Activated naive CD4-positive, alpha-beta T cell treated with anti-CD3 and anti-CD28 coated beads for 36 hours (primary cell): ENCODE measurements at regions of chr20 and their contacts with region 1.

Region 1: DNA sequence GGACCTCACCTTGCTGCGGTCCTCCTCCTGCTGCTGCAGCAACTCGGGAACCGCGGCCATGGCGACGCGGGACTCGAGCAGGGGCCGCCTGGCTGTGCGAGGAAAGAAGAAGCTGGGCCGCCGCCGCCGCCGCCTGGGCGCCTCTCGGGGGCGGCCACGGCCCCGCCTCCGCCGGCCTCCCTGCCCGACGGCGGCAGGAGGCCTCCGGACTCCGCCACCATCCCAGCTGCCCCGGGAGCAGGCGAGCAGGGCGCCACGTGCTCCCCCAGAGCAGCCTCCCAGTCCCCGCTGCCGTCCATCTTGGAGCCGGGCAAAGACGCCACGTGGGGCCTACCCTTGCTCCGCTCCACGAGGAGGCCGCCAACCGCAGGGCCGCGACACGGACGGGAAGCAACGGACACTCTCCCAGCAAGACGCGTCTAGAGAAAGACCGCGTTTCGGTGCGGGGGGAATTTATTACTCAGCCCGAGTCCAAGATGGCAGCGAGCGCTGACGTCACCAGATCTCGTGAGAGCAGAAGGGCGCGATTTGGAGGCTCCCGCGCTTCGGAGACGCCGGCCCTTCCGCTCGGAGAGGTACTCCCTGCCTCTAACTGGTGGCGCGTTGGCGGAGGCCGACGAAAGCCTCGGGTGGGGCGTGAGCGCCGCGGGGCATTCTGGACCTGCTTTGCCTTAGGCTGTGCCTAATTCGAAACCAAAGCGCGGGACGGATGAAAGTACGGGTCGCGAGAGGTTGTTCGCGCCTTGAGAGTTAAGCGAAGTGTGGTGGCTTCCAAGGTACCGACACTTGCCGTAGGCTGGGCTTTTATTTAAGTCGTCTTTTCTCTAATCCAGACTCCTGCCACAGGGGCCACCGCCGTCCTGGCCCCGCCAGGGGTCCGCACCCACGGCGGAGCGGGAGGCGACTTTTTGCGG is at the starts of genes MGME1 and SNX5:
- DNase-seq: peak; percentile 99
- H3K4me3 Mint-ChIP-seq: peak within 1 kb of the TSS; percentile 86
- H3K27ac Mint-ChIP-seq: peak within 1 kb of the TSS; percentile 98
- H3K4me1 Mint-ChIP-seq: peaks cover 49% of the 10 kb centered on the region
- H3K27me3 Mint-ChIP-seq: no peaks in the 10 kb centered on the region
- total RNA-seq, gene MGME1: 28.7 to 30.6 TPM
- total RNA-seq, gene SNX5: 228 to 237 TPM

Region 2: DNA sequence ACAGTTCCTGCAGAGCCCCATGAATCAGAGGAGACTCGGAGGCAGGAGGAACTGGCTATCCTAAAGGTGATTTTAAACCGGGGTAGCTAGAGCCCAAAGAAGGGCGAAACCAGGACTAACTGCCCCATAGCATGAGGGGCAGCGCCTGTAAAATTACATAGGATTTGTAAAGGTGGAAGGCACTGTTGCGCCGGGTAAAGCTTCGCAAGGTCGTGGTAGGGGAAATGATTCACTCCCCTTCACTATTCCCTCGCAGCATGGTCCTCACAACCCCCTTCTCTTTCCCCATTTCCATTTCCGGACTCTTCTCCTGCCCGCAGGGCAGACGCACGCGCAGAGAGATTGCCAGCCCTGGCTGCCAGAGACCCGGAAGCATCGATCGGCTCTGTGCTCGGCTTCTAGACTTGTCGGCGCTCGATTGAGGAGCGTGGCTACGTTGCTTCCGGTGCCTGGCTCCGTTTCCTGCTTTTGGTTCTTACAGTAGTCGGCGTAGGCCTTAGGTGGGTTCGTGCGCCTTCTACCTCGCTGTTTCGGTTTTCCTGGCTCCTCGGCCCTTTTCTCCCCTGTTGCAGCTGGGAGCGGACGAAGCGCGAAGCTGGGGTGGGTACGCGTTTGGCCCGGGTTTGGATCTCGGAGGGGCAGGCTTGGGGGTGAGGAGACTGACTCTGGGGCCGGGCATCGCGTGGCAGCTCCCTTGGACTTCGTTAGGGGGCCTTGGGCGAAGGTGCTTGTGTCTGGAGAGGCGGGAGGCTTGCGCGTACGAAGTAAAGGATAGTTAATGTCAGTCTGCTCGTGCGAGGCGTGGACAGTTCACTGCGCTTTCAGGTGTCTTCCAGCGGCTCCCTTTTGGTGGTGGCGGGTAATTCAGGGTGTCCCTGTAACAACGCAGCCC is 1238.8 kb before region 1 on chr20 and contains the start of gene SNRPB2:
- CTCF ChIA-PET with region 1: interaction called, 3 read pairs
- intact Hi-C with region 1: loop called (anchors 5 kb)
- DNase-seq: peak; percentile 95
- H3K4me3 Mint-ChIP-seq: peak within 1 kb of the TSS; percentile 99
- H3K27ac Mint-ChIP-seq: peak within 1 kb of the TSS; percentile 98
- H3K4me1 Mint-ChIP-seq: peaks cover 45% of the 10 kb centered on the region
- H3K27me3 Mint-ChIP-seq: peaks cover 6% of the 10 kb centered on the region
- total RNA-seq, gene SNRPB2: 93.1 to 99.8 TPM

Region 3: DNA sequence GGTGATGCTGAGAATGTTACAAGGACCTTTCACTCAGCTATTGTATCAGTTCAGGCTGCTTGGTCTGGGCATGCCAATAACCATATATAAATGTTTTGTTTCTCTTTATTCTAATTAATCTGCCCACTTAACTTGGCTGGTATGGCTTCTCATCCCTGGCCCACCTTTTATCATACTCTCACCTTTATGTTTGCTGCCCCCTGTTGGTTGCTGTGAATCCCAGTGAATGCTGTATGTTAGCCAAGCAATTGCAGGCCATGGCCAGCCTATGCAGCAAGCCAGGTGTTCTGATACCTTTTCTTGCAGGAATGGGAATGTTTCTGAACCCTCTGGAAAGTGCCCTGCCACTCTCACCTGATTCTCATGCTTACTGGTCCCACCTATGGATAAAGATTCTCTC is 687.1 kb before region 1 on chr20:
- CTCF ChIA-PET with region 1: no interaction called
- intact Hi-C with region 1: no loop called
- DNase-seq: peak; percentile 28
- H3K4me3 Mint-ChIP-seq: no peak overlapping the region
- H3K27ac Mint-ChIP-seq: no peak overlapping the region
- H3K4me1 Mint-ChIP-seq: no peaks in the 10 kb centered on the region
- H3K27me3 Mint-ChIP-seq: no peaks in the 10 kb centered on the region

Region 4: DNA sequence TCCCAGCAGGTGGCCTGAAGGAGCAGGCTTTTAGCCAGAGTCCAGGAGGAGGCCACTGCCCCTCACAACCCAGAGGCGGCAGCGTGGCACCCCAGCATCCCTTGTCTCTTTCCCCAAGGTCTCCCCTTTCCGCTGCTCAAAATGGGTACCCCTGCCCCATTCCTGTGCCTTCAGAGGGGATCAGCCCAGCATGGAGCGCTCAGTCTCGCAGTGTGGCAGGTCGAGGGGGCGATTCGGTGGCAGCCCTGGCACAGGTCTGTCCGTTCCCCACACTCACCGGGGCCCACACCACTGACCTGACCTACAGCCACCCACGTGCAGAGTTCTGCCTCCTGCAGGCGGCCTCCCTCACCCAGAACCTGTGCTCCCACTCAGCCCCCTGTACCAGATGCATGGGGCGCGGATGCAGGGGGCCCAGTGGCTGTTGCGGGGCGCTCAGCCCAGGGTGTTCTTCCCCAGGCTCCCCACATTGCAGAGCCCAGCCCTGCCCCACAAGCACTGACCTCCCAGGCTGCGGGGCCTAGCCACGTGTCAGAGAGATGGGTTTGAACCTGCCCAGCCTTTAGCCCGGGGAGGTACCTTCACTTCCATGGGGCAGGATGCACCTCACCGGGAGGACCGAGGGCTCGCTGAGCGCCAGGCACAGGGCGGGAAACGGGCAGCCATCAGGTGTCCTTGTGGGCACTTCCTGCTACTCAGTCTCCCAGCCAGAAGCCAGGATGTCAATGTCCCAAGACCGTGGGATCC is 356.9 kb before region 1 on chr20:
- CTCF ChIA-PET with region 1: no interaction called
- intact Hi-C with region 1: loop called (anchors 5 kb)
- DNase-seq: no peak
- H3K4me3 Mint-ChIP-seq: peak overlapping the region; percentile 38
- H3K27ac Mint-ChIP-seq: peak overlapping the region; percentile 82
- H3K4me1 Mint-ChIP-seq: peaks cover 34% of the 10 kb centered on the region
- H3K27me3 Mint-ChIP-seq: no peaks in the 10 kb centered on the region

Region 5: GRCh38 chr20:17995967-17996819 is 27.6 kb after region 1 on chr20:
- CTCF ChIA-PET with region 1: interaction called, 8 read pairs
- intact Hi-C with region 1: loop called (anchors 1 kb)
- DNase-seq: peak; percentile 59
- H3K4me3 Mint-ChIP-seq: no peak overlapping the region
- H3K27ac Mint-ChIP-seq: no peak overlapping the region
- H3K4me1 Mint-ChIP-seq: peaks cover 21% of the 10 kb centered on the region
- H3K27me3 Mint-ChIP-seq: peaks cover 12% of the 10 kb centered on the region

Region 6: GRCh38 chr20:18466894-18467730 is 498.5 kb after region 1 on chr20 and contains the starts of genes DZANK1 and POLR3F:
- CTCF ChIA-PET with region 1: no interaction called
- intact Hi-C with region 1: loop called (anchors 2 kb)
- DNase-seq: peak; percentile 94
- H3K4me3 Mint-ChIP-seq: peak within 1 kb of the TSS; percentile 92
- H3K27ac Mint-ChIP-seq: peak within 1 kb of the TSS; percentile 84
- H3K4me1 Mint-ChIP-seq: peaks cover 32% of the 10 kb centered on the region
- H3K27me3 Mint-ChIP-seq: no peaks in the 10 kb centered on the region
- total RNA-seq, gene DZANK1: 0.79 to 0.94 TPM
- total RNA-seq, gene POLR3F: 7.0 to 8.3 TPM

Region 7: DNA sequence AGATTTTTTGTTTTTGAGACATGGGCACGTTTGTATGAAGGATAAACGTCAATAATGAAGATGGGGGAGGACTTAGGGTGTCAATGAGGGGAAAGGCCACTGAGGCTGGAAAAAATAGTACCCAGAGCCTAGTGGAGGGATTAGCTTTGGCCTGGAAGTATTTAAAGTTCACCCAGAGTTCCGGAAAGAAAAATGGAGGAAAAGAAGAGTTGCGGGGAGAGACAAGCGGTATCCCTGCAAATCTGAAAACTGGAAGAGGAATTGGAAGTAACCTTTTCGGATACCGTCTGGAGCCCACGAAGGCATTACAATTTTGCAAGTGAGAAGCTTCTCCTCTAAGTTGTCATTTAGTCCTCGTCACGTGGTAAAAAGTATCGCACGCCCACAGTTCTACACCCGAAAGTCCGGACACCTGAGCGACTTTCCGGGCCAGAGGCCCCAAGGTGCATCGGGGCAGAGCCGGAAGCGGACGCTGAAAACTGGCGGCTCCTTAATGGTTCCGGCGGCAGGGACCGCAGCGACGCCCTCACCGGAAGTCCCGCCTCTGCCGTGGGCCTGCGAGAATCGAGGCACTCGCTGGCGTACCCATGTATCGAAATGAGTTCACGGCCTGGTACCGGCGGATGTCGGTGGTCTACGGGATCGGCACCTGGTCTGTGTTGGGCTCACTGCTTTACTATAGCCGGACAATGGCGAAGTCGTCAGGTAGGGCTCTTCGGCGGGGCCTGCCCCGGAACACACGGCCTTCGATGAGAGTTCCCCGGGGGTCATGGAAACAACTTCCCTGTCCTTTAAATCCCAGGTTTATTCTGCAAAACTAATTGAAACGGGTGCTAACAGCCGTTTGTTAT is 598.5 kb after region 1 on chr20 and contains the start of gene SMIM26:
- CTCF ChIA-PET with region 1: no interaction called
- intact Hi-C with region 1: loop called (anchors 1 kb)
- DNase-seq: peak; percentile 95
- H3K4me3 Mint-ChIP-seq: peak within 1 kb of the TSS; percentile 94
- H3K27ac Mint-ChIP-seq: peak within 1 kb of the TSS; percentile 95
- H3K4me1 Mint-ChIP-seq: peaks cover 19% of the 10 kb centered on the region
- H3K27me3 Mint-ChIP-seq: no peaks in the 10 kb centered on the region
- total RNA-seq, gene SMIM26: 57.3 to 60.0 TPM